ENCODE measurements at regions of chr13 and their contacts with region 1.

Region 1: DNA sequence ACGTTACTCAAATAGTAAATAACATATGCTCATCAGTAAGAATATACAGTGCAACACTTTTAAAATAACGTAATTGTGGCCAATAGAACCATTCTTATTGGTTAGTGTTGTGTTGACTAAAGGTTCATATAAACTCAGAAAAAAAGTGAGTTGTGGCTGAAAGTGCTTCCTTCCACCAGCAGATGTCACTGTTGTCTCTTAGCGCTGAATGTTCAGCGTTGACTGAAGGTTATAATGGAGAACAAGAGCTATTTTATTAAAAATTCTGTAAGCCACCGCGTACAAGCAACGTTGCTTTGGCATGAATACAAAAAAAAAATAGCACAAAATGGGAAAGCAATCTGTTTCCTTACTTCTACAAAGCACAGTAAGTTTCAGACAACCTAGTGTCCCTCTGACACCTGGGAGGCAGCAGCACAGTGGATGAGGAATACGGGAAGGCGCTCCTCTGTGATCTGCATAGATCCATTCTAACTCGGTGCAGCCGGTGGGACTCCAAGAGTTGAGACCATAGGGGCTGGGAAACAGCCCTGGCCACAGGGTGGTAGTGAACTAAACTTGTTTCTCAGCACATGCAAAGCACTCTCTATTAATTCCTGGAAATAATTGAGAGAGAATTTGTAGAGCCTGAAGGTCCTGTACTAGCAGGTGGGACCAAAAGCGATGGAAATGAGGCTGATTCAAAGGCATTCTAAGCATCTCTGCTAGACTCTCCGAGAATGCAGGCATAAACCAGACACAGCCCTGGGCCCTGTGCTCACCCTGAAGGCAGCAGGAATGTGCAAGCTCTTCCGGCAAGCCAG is 24.0 kb upstream of the OXGR1 start:
- DNase-seq: peak; percentile 56
- H3K4me3 Mint-ChIP-seq: no peak overlapping the region
- H3K27ac Mint-ChIP-seq: no peak overlapping the region
- H3K4me1 Mint-ChIP-seq: peaks cover 6% of the 10 kb centered on the region
- H3K27me3 Mint-ChIP-seq: peaks cover 36% of the 10 kb centered on the region

Region 2: DNA sequence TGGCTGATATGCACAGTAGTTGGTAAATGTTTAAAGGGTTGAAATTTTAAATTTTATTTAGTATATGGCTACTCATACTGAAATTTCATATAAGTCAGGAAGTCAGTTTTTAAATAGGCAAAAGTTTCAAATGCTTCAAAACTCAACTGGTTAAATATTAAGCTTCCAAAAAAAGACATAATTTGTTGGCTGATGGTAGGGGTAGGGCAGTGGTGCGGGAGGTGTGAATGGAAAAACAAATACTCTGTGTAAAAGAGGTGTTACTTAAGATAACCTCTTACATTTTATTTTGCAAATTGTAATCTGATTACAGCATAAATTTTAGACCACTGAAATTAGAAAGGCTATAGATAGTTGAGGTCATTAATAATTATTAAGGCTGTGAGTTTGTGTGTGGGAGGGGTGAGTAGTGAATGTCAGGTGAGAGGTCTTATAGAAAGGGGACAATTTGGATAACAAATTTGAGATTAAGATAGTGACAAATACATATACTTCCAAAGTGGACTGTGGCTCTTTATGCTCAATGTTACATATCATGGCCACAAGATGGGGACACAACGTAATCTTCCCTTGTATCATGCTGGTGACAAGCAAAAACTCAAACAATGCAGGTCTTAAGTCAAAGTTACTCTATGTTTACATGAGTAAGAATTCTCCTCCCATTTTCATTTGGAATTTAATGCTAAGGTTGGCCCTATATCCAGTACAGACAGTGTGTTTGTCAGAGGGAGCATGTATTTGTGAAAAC is 12.6 kb after region 1 on chr13:
- CTCF ChIA-PET with region 1: interaction called, 3 read pairs
- intact Hi-C with region 1: loop called (anchors 1 kb)
- DNase-seq: no peak
- H3K4me3 Mint-ChIP-seq: no peak overlapping the region
- H3K27ac Mint-ChIP-seq: no peak overlapping the region
- H3K4me1 Mint-ChIP-seq: no peaks in the 10 kb centered on the region
- H3K27me3 Mint-ChIP-seq: peaks cover 13% of the 10 kb centered on the region

Region 3: DNA sequence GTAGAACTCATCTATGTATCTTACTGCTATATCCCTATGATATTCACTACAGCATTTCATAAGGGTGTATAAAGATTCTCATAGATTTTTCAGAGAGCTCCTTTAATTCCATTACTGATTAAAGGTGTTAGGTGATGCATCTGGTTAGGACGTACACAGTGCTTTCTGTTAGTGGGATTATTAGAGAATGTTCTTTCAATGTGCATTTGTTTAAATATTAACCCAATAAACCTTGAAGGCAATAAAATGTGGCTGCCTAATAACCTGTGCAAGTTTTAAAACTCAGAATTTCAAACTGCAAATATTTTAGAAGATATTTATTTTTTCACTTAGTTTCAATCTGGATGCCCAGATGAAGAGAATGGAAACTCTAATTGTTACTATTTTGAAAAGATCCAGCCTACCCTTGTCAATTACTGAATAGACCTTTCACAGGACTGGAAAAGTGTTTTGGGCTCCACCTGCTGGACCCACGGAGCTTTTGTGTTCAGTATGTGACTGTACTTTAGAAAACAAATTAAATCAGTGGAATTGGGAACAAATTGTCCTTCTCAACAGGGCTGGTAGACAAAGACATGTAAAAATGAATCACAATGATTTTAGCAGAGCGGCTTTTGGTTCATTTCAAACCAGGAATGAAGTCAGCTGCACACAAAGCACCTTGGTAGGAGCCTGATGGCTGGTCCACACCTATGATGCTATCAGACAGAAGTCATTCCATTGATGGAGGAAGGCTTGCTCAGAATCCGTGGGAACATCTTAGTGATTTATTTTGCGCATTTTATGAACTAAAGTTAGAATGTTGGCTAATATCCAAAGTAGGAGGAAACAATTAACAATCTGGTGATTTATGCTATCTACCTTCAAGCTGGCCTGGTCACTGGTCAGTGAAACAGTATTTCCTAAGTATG is 326.3 kb after region 1 on chr13:
- CTCF ChIA-PET with region 1: interaction called, 6 read pairs
- intact Hi-C with region 1: loop called (anchors 5 kb)
- DNase-seq: peak; percentile 72
- H3K4me3 Mint-ChIP-seq: no peak overlapping the region
- H3K27ac Mint-ChIP-seq: no peak overlapping the region
- H3K4me1 Mint-ChIP-seq: peaks cover 6% of the 10 kb centered on the region
- H3K27me3 Mint-ChIP-seq: no peaks in the 10 kb centered on the region

Region 4: GRCh38 chr13:97359181-97360057 is 341.2 kb after region 1 on chr13:
- CTCF ChIA-PET with region 1: interaction called, 13 read pairs
- intact Hi-C with region 1: loop called (anchors 1 kb)
- DNase-seq: peak; percentile 60
- H3K4me3 Mint-ChIP-seq: no peak overlapping the region
- H3K27ac Mint-ChIP-seq: no peak overlapping the region
- H3K4me1 Mint-ChIP-seq: no peaks in the 10 kb centered on the region
- H3K27me3 Mint-ChIP-seq: no peaks in the 10 kb centered on the region

Region 5: GRCh38 chr13:97574926-97575325 is 556.7 kb after region 1 on chr13:
- CTCF ChIA-PET with region 1: no interaction called
- intact Hi-C with region 1: loop called (anchors 1 kb)
- DNase-seq: peak; percentile 51
- H3K4me3 Mint-ChIP-seq: no peak overlapping the region
- H3K27ac Mint-ChIP-seq: no peak overlapping the region
- H3K4me1 Mint-ChIP-seq: no peaks in the 10 kb centered on the region
- H3K27me3 Mint-ChIP-seq: peaks cover 6% of the 10 kb centered on the region

Region 6: GRCh38 chr13:97798836-97799235 is 780.6 kb after region 1 on chr13:
- CTCF ChIA-PET with region 1: no interaction called
- intact Hi-C with region 1: loop called (anchors 5 kb)
- DNase-seq: no peak
- H3K4me3 Mint-ChIP-seq: no peak overlapping the region
- H3K27ac Mint-ChIP-seq: no peak overlapping the region
- H3K4me1 Mint-ChIP-seq: no peaks in the 10 kb centered on the region
- H3K27me3 Mint-ChIP-seq: peaks cover 21% of the 10 kb centered on the region

Region 7: DNA sequence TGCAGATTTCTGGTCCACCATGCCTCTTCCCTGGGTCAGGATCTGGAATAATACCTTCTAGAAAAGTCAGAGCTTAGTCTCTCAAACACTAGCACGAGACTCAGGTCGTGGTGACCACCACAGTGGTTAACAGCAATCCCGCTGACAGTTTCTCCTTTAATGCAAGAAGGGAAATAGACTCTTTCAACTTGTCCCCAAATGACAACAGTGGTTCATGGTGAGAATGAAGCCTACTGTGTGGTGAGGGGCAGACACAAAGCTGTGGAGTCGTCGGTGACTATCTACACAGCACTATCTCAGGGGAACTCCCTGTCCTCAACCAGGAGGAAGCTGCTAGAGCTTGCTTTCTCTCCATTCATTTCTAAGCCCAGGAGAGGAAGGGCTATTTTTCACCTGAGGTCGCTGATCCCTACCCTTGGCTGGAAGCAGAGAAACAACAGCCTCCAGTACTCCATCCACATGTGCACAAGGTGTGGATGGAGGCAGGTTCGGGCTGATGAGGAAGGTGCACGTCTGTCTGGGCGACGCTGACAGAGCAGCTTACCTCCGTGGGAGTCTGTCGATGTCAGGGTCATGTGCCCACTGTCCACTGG is 1486.2 kb after region 1 on chr13:
- CTCF ChIA-PET with region 1: no interaction called
- intact Hi-C with region 1: no loop called
- DNase-seq: peak; percentile 60
- H3K4me3 Mint-ChIP-seq: no peak overlapping the region
- H3K27ac Mint-ChIP-seq: peak overlapping the region; percentile 39
- H3K4me1 Mint-ChIP-seq: peaks cover 81% of the 10 kb centered on the region
- H3K27me3 Mint-ChIP-seq: no peaks in the 10 kb centered on the region